ENCODE measurements at regions of chr22 and their contacts with region 1.

Region 1: DNA sequence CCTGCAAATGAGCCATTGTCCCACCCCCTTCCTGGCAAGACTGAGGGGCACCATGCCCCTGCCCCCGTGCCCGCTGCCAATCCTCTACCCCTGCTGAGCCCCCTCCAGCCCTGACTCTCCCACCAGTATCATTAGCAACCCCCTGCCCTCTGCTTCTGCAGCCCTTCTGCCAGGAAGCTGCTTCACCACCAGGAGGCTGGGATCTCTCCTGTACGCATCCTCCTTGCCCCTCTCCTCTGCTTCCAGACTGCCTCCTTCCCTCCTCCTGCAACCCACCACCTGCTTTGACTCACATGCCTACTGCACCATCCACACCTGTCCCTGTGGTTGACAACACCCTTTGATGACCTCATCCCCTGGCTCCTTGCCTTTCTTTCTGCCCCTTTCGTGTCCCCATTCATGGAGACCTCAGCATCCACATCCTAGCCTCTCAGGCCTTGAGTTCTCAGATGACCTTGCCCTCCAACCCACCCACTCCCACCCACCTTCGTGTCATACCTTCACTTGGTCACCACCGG is 13.4 kb upstream of the PNPLA3 start:
- DNase-seq: no peak
- H3K4me3 ChIP-seq: no peak overlapping the region
- H3K27ac ChIP-seq: no peak overlapping the region
- H3K4me1 ChIP-seq: peaks cover 0 to 2% (median 0%) of the 10 kb centered on the region in 4 experiments; a peak in 1 of 7 replicates
- H3K27me3 ChIP-seq: no peaks in the 10 kb centered on the region; a peak in 1 of 7 replicates
- CTCF ChIP-seq: peak in 1 of 3 experiments; percentile 1; a peak in 1 of 4 replicates
- EP300 ChIP-seq: no peak
- POLR2A ChIP-seq: no peak
- RAD21 ChIP-seq: no peak

Region 2: DNA sequence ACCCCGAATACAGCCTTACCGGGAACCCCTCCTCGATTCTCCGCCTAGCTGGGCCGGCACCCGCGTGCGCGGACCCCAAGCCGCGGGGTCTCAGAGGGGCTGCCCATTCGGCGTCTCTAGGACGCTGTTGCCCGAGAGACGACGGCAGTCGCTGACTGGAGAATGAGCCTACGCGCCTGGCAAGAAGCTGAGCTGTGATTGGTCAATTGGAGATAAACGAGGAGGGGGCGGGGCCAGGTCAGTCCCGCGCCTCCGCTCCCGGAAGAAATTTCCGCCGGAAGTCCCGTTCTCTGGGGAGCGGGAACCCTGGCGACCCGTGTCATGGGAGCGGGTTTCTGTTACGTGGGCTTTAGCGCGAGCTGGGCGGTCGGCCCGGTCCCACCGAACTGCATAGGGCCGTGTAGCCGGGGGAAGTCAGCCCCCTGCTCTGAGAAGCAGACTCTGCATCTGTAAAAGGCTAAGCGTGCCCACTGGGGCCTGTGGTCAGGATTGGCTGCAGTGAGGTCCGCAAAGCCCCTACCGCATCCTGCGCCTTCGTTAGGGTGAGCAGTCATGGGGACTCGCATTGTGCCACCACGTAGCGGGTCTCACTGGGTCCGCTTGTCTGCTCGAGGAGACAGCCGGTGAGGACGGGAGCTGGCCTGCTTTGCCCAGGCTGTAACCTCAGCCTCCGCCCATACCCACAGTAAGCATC is 97.9 kb before region 1 on chr22 and contains the start of gene EFCAB6:
- CTCF ChIA-PET with region 1: no interaction called
- POLR2A ChIA-PET with region 1: no interaction called
- DNase-seq: peak; percentile 83 to 93
- H3K4me3 ChIP-seq: peak within 1 kb of the TSS; percentile 67 to 86 (median 76)
- H3K27ac ChIP-seq: peak within 1 kb of the TSS; percentile 90
- H3K4me1 ChIP-seq: peaks cover 0 to 13% (median 5%) of the 10 kb centered on the region in 4 experiments; a peak in 6 of 7 replicates
- H3K27me3 ChIP-seq: no peaks in the 10 kb centered on the region
- CTCF ChIP-seq: no peak
- EP300 ChIP-seq: no peak
- POLR2A ChIP-seq: peak in 1 of 2 experiments; percentile 77; a peak in 2 of 3 replicates
- RAD21 ChIP-seq: 0 out of 4 replicates have a peak, but pooled peaks of 1 of the 2 experiments have one; percentile 0
- total RNA-seq, gene EFCAB6: 1.5 and 1.7 TPM in 2 replicates

Region 3: DNA sequence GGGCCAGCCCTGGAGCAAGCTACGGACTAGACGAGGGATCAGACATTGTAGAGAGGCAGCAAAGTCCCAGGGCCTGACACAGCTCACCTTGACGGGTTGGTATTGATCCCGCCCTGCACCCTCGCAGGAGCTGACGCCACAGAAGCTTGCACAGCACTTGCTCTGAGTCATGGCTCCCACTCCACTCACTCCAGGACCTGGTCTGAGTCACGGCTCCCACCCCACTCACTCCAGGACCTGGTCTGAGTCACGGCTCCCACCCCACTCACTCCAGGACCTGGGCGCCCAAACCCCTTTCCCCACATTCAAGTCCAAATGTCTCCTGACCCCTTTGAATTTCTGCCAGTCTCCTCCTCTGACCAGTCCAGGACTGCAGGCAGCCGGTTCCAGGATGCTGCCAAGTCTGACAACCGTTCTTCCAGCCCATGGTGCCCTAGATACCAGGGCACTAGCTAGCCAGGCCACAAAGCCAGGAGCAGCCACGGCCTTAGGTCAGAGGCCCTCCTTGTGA is 12.4 kb before region 1 on chr22:
- CTCF ChIA-PET with region 1: interaction called, 10 read pairs
- POLR2A ChIA-PET with region 1: interaction called, 7 read pairs
- DNase-seq: no peak
- H3K4me3 ChIP-seq: no peak overlapping the region
- H3K27ac ChIP-seq: no peak overlapping the region
- H3K4me1 ChIP-seq: peaks cover 0 to 4% (median 0%) of the 10 kb centered on the region in 4 experiments; a peak in 3 of 7 replicates
- H3K27me3 ChIP-seq: no peaks in the 10 kb centered on the region; a peak in 1 of 7 replicates
- CTCF ChIP-seq: no peak
- EP300 ChIP-seq: no peak
- POLR2A ChIP-seq: no peak
- RAD21 ChIP-seq: no peak